ENCODE measurements at regions of chr2 and their contacts with region 1.

Region 1: DNA sequence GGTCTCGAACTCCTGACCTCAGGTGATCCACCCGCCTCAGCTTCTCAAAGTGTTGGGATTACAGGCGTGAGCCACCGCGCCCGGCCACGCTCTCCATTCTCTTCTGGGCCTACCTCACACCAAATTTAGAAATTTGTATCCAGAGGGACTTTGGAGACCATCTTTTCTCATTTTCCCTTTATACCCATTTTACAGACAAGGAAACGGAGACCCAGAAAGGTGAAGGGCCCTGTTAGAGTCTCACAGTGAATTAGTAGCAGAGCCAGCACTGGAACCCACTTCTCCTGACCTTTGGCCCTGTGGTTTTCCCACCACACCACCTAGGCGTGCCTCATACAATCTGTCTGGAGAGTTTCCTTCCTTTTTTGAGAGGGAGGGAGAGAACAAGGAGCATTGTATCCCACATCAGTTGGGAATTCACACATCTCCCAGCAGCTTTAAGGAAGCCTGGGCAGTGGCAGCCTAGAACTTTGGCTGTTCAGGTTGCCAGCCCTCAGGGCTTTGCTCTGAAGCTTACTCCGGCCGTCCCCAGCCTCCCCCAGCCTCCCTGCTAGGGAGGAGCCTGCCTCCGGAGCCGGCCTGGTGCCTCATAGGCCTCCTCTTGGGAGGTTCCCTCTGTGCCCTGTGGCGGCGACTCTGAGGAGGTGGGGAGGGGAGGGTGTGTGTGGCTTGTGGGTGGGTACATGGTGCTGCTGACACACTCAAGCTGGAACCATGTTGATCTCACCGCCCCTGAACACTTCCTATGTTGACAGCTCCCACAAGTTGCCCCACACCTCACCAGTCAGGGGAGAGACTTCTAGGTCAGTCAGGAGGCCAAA is 13.8 kb downstream of the FOSL2 start:
- DNase-seq: peak; percentile 88
- H3K4me3 Mint-ChIP-seq: peak overlapping the region; percentile 19
- H3K27ac Mint-ChIP-seq: peak overlapping the region; percentile 97
- H3K4me1 Mint-ChIP-seq: peaks cover 96% of the 10 kb centered on the region
- H3K27me3 Mint-ChIP-seq: no peaks in the 10 kb centered on the region

Region 2: GRCh38 chr2:28423856-28424605 is 17.5 kb after region 1 on chr2:
- CTCF ChIA-PET with region 1: interaction called, 10 read pairs
- POLR2A ChIA-PET with region 1: interaction called, 29 read pairs
- DNase-seq: peak; percentile 57
- H3K4me3 Mint-ChIP-seq: peak overlapping the region; percentile 43
- H3K27ac Mint-ChIP-seq: peak overlapping the region; percentile 93
- H3K4me1 Mint-ChIP-seq: peaks cover 69% of the 10 kb centered on the region
- H3K27me3 Mint-ChIP-seq: no peaks in the 10 kb centered on the region

Region 3: DNA sequence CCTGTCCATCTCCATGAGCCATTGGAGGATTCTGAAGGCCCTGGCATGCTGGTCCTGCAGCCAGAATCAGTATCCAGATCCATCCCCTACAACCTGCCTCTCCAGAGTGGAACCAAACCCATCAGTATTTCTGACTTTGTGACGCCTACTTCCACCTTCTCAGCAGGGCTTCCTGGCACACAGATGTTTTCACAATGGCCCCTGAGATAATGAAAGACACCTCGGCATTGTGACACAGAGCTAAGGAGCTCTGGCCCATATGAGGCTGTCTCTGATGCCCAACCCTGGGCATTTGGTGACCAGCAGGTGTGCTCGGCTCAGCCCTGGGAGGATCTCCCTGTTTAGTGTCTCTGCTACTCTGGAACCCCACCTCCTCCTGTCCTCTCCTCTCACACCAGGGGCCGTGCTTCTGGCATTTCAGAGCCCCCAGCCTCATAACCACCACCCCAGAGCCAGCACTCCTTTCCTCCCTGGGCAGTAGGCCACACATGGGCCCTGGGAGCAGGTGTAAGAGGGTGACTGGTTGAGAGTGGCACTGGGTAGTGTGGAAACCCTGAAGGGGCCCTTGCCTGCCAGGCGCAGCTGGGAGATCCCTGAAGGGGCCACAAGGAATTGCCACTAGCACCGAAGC is 24.4 kb after region 1 on chr2:
- CTCF ChIA-PET with region 1: interaction called, 3 read pairs
- POLR2A ChIA-PET with region 1: interaction called, 29 read pairs
- DNase-seq: no peak
- H3K4me3 Mint-ChIP-seq: no peak overlapping the region
- H3K27ac Mint-ChIP-seq: peak overlapping the region; percentile 85
- H3K4me1 Mint-ChIP-seq: peaks cover 81% of the 10 kb centered on the region
- H3K27me3 Mint-ChIP-seq: no peaks in the 10 kb centered on the region